GM12878 (cell line): ENCODE measurements at regions of chr7 and their contacts with region 1.

Region 1: GRCh38 chr7:43582503-43583423 is at the start of gene STK17A:
- DNase-seq: peak; percentile 82
- ATAC-seq: peak; percentile 66
- H3K4me3 ChIP-seq: peak within 1 kb of the TSS; percentile 84
- H3K27ac ChIP-seq: peak within 1 kb of the TSS; percentile 98
- H3K4me1 ChIP-seq: peaks cover 5% of the 10 kb centered on the region
- H3K27me3 ChIP-seq: no peaks in the 10 kb centered on the region
- CTCF ChIP-seq: peak; percentile 99 to 100 (median 100); a peak in 5 of 6 replicates
- EP300 ChIP-seq: no peak
- POLR2A ChIP-seq: peak; percentile 93
- RAD21 ChIP-seq: peak; percentile 100
- polyA plus RNA-seq, gene STK17A: 18.5 to 27.6 TPM

Region 2: DNA sequence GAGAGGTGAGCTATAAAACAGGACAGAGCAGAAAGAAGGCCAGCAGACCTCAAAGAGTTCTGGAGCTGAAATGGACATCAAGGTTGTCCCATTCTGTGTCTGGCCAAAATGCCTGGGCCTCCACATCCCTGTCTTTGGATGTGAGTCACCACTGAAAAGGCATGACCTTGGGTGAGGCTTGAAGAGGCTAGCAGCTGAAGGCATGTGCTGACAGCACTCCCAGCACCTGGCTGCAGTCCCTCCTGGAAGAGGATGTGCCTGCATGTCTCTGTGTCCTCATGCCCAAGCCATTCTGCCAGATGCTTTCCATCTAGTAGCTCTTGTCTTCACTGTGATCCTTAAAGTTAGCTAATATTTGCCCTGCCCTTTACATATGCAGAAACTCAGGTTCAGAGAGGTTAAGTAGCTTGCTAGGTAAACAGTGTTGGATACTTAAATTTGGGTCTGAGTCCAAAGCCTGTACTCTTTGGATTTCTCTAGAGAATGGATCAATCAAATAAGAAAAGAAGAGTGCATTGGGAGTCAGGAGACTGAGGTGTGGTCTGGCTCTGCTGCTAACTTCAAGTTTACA is 434.5 kb before region 1 on chr7:
- CTCF ChIA-PET with region 1: no interaction called
- POLR2A ChIA-PET with region 1: no interaction called
- RAD21 ChIA-PET with region 1: no interaction called
- SMC1A ChIA-PET with region 1: no interaction called
- in situ Hi-C with region 1: no loop called
- intact Hi-C with region 1: no loop called
- DNase-seq: no peak
- ATAC-seq: no peak
- H3K4me3 ChIP-seq: no peak overlapping the region
- H3K27ac ChIP-seq: no peak overlapping the region
- H3K4me1 ChIP-seq: no peaks in the 10 kb centered on the region
- H3K27me3 ChIP-seq: no peaks in the 10 kb centered on the region; a peak in 1 of 4 replicates
- CTCF ChIP-seq: no peak
- EP300 ChIP-seq: no peak
- POLR2A ChIP-seq: no peak
- RAD21 ChIP-seq: no peak

Region 3: GRCh38 chr7:43467406-43467805 is 115.4 kb before region 1 on chr7:
- CTCF ChIA-PET with region 1: interaction called, 10 read pairs
- POLR2A ChIA-PET with region 1: no interaction called
- RAD21 ChIA-PET with region 1: interaction called, 4 read pairs
- SMC1A ChIA-PET with region 1: no interaction called
- in situ Hi-C with region 1: no loop called
- intact Hi-C with region 1: no loop called
- DNase-seq: no peak
- ATAC-seq: peak; percentile 44
- H3K4me3 ChIP-seq: no peak overlapping the region
- H3K27ac ChIP-seq: no peak overlapping the region
- H3K4me1 ChIP-seq: peaks cover 2% of the 10 kb centered on the region; the same call in 1 of the 2 replicates
- H3K27me3 ChIP-seq: no peaks in the 10 kb centered on the region; a peak in 1 of 4 replicates
- CTCF ChIP-seq: no peak
- EP300 ChIP-seq: no peak
- POLR2A ChIP-seq: no peak
- RAD21 ChIP-seq: no peak

Region 4: GRCh38 chr7:43619213-43620012 is 36.6 kb after region 1 on chr7:
- CTCF ChIA-PET with region 1: interaction called, 34 read pairs
- POLR2A ChIA-PET with region 1: interaction called, 6 read pairs
- RAD21 ChIA-PET with region 1: interaction called, 23 read pairs
- SMC1A ChIA-PET with region 1: interaction called, 19 read pairs
- in situ Hi-C with region 1: no loop called
- intact Hi-C with region 1: loop called (anchors 2 kb)
- DNase-seq: no peak
- ATAC-seq: no peak
- H3K4me3 ChIP-seq: no peak overlapping the region
- H3K27ac ChIP-seq: no peak overlapping the region
- H3K4me1 ChIP-seq: peaks cover 17% of the 10 kb centered on the region
- H3K27me3 ChIP-seq: no peaks in the 10 kb centered on the region
- CTCF ChIP-seq: no peak
- EP300 ChIP-seq: no peak
- POLR2A ChIP-seq: no peak
- RAD21 ChIP-seq: no peak

Region 5: DNA sequence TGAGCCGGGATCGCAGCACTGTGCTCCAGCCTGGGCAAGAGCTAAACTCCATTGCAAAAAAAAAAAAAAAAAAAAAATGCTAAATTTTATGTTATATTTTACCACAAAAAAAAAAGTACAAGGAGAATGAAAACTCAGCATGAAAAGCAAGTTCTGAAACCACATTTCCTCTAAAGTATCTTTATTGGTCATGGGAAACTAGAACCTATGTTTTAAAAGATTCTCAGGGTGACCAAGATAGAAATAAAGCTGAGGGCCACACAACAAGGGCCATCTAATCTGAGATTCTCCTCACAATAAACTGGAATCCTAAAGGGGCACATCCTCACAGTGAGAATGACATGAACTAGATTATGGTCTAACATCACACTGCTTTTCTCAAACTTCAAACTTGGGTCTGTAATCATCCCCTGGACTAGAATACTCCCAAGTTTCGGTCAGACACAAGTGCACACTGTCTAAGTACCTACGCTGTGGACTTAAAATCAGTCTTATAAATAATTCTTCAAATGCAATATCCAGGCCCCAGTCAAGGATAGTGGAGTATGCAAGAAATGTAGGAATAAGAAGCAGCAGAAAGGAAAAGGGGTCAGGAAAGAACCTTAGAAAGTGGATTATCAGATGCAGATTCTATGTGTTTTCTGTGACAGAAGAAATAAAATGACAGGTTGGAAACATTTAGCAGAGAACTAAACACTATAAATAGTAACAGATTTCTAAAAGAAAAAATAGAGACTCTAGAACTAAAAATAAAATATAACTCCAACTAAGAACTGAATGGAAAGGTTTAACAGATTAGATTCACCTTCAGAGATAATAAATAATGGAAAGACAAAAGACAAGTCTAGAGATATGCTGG is 96.7 kb after region 1 on chr7:
- CTCF ChIA-PET with region 1: interaction called, 12 read pairs
- POLR2A ChIA-PET with region 1: interaction called, 3 read pairs
- RAD21 ChIA-PET with region 1: interaction called, 8 read pairs
- SMC1A ChIA-PET with region 1: interaction called, 3 read pairs
- in situ Hi-C with region 1: no loop called
- intact Hi-C with region 1: no loop called
- DNase-seq: peak; percentile 48
- ATAC-seq: peak; percentile 71
- H3K4me3 ChIP-seq: no peak overlapping the region
- H3K27ac ChIP-seq: peak overlapping the region; percentile 80
- H3K4me1 ChIP-seq: peaks cover 11% of the 10 kb centered on the region
- H3K27me3 ChIP-seq: no peaks in the 10 kb centered on the region
- CTCF ChIP-seq: no peak
- EP300 ChIP-seq: no peak
- POLR2A ChIP-seq: no peak
- RAD21 ChIP-seq: no peak

Region 6: GRCh38 chr7:43721193-43721806 is 138.5 kb after region 1 on chr7:
- CTCF ChIA-PET with region 1: interaction called, 169 read pairs
- POLR2A ChIA-PET with region 1: interaction called, 10 read pairs
- RAD21 ChIA-PET with region 1: interaction called, 150 read pairs
- SMC1A ChIA-PET with region 1: interaction called, 99 read pairs
- in situ Hi-C with region 1: loop called (anchors 5 kb)
- intact Hi-C with region 1: loop called (anchors 1 kb)
- DNase-seq: no peak
- ATAC-seq: peak; percentile 52
- H3K4me3 ChIP-seq: no peak overlapping the region
- H3K27ac ChIP-seq: no peak overlapping the region
- H3K4me1 ChIP-seq: no peaks in the 10 kb centered on the region
- H3K27me3 ChIP-seq: no peaks in the 10 kb centered on the region
- CTCF ChIP-seq: peak; percentile 40 to 64 (median 44); a peak in 5 of 6 replicates
- EP300 ChIP-seq: no peak
- POLR2A ChIP-seq: no peak
- RAD21 ChIP-seq: peak; percentile 68

Region 7: DNA sequence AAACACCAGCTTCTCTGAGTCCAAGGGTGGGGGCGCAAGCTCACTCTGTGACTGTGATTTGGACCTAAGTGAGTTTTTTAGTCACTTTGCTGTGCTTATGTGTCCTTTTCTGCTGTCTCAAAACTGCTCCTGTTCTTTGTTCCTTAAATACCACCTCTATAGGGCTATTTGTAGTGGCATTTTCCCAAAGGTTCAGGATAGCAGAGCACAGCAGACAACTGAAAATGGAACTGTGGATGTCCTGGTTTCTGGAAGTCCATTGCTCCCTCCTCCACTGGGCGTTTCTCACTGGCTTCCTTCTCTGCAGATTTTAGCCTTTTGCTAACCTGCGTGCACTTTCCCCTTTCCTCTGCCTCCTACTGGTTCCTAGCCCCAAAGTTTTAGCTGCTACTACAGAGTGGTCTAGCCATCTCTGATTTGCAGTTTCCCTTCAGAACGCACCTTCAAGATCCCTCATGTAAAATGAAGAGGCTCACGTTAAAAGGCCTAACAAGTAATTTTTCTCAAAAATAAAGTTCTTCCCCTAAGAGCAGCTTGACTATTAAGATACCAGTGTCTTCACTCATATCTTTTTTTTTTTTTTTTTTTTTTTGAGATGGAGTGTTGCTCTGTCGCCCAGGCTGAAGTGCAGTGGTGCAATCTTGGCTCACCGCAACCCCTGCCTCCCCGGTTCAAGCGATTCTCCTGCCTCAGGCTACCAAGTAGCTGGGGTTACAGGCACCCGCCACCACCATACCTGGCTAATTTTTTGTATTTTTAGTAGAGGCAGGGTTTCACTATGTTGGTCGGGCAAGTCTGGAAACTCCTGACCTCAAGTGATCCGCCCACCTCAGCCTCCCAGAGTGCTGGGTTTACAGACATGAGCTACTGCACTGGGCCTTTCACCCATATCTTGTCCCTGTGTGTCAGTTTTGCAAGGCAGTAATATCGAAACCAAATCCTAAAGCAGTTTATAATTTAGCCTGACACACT is 201.6 kb after region 1 on chr7:
- CTCF ChIA-PET with region 1: interaction called, 13 read pairs
- POLR2A ChIA-PET with region 1: interaction called, 4 read pairs
- RAD21 ChIA-PET with region 1: interaction called, 20 read pairs
- SMC1A ChIA-PET with region 1: interaction called, 27 read pairs
- in situ Hi-C with region 1: no loop called
- intact Hi-C with region 1: no loop called
- DNase-seq: peak; percentile 82
- ATAC-seq: peak; percentile 97
- H3K4me3 ChIP-seq: peak overlapping the region; percentile 47
- H3K27ac ChIP-seq: peak overlapping the region; percentile 56
- H3K4me1 ChIP-seq: peaks cover 16% of the 10 kb centered on the region
- H3K27me3 ChIP-seq: no peaks in the 10 kb centered on the region
- CTCF ChIP-seq: no peak; a peak in 1 of 6 replicates
- EP300 ChIP-seq: no peak
- POLR2A ChIP-seq: no peak
- RAD21 ChIP-seq: no peak